Pancreas (tissue), 10 donors: ENCODE measurements at regions of chr2 and their contacts with region 1.

Region 1: GRCh38 chr2:191369036-191369435 is 123.8 kb downstream of the MYO1B start:
- DNase-seq: no peak
- ATAC-seq: peak in 2 of 4 donors; percentile 37 to 44
- H3K4me3 ChIP-seq: no peak overlapping the region
- H3K27ac ChIP-seq: no peak overlapping the region
- H3K4me1 ChIP-seq: peaks cover 0 to 3% (median 0%) of the 10 kb centered on the region in 3 donors
- H3K27me3 ChIP-seq: no peaks in the 10 kb centered on the region
- CTCF ChIP-seq: peak in 1 of 4 donors; percentile 7

Region 2: DNA sequence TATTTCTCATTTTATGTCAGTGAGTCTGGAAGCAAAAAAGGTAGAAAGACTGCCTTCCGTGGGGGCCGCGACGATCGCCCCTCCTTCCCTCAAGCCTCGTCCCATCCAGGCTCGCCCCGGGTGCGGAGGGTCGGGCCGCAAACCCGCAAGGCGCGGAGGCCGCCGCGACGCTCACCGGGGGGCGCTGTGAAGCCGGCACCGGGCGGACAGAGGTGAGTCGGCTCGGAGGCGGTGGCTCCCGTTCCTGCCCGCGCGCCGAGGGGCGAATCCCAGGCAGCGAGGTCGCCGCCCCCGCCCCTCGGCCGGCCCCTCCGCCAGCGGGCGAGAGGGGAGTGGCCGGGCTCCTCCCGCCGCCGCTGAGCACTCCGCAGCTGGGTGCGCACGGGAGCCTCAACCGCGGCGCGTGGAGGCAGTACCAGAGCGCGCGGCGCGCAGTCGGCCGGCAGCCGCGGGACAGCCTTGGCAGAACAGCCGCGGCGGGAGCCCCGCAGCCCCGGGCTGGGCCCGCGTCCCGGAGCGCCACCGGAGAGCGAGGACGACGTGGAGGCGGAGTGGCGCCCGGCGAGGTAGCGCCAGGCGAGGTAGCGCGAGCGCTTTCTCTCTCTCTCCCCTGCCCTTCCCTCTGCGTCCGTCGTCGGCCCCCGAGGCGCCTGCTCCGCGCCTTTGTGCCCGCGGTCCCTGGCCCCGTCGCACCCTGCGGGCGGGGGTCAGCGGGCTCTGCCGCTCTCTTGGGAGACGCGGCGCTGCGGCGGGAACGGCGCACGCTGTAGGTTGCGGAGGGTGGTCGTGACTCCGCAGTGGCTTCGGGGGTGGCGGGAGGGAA is 123.8 kb before region 1 on chr2 and contains the start of gene MYO1B:
- intact Hi-C with region 1: loop called in 2 of 3 experiments (anchors 10 kb)
- DNase-seq: peak; percentile 87 to 94 (median 89)
- ATAC-seq: peak; percentile 82 to 92 (median 88)
- H3K4me3 ChIP-seq: peak within 1 kb of the TSS; percentile 81 to 97 (median 90)
- H3K27ac ChIP-seq: peak within 1 kb of the TSS; percentile 75 to 97 (median 88)
- H3K4me1 ChIP-seq: peaks cover 19 to 33% (median 20%) of the 10 kb centered on the region in 3 donors
- H3K27me3 ChIP-seq: no peaks in the 10 kb centered on the region
- CTCF ChIP-seq: peak; percentile 13 to 46 (median 37)
- total RNA-seq, gene MYO1B: 54.2 to 102 (median 58.4) TPM

Region 3: DNA sequence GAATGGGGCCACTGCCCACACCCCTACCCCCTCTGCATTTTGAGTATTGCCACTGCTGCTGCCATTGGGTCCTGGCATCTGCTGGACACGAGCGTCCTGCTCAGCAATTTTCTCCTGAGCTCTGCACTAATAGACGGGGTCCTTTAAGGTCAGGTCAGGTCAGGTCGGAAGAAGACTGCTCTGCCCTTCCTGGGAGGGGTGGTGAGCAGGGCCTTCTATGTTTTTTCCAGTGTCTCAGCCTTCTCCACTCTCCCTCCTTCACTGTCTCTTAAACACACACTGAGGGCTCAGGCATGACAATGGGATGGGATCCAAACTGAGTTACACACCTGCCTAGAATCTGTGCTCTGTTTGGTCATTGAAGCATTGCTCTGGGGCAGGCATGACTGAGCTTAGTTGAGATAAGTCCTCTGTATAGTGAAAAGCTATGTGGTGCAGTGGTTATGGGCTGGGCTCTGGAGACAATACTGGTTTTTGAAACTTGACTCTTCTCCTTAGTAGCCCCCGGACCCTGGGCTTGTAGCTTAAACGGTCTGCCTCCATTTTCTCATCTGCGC is 113.2 kb before region 1 on chr2:
- intact Hi-C with region 1: loop called in 1 of 3 experiments (anchors 10 kb)
- DNase-seq: no peak
- ATAC-seq: peak; percentile 22 to 70 (median 36)
- H3K4me3 ChIP-seq: no peak overlapping the region
- H3K27ac ChIP-seq: no peak overlapping the region
- H3K4me1 ChIP-seq: peaks cover 2 to 38% (median 9%) of the 10 kb centered on the region in 3 donors
- H3K27me3 ChIP-seq: no peaks in the 10 kb centered on the region
- CTCF ChIP-seq: no peak